Endothelial cell of umbilical vein (primary cell): ENCODE measurements at regions of chr7 and their contacts with region 1.

Region 1: DNA sequence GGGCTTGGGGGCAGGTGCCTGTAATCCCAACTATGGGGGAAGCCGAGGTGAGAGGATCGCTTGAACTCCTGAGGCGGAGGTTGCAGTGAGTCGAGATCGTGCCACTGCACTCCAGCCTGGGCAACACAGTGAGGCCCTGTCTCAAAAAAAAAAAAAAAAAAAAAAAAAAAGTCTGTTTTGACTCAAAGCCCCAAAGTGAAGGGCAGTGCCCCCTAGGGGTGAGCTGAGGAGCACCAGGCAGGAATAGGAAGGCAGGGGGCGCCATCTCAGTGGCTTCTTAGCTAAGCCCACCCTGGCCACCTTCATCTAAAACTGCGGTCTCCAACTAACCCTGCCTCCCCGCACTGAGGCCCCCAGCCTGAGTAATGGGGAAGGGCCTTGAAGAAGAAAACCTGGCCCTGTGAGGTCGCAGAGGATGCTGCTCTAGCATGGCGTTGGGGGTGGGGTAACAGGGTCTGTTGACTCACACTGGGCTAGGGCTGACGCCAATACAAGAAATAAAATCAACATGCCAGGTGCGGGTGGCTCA is 9.8 kb downstream of the PODXL start:
- DNase-seq: peak; percentile 57
- H3K4me3 ChIP-seq: no peak overlapping the region
- H3K27ac ChIP-seq: no peak overlapping the region
- H3K4me1 ChIP-seq: peaks cover 29% of the 10 kb centered on the region
- H3K27me3 ChIP-seq: no peaks in the 10 kb centered on the region
- CTCF ChIP-seq: peak; percentile 83 to 85
- POLR2A ChIP-seq: no peak

Region 2: DNA sequence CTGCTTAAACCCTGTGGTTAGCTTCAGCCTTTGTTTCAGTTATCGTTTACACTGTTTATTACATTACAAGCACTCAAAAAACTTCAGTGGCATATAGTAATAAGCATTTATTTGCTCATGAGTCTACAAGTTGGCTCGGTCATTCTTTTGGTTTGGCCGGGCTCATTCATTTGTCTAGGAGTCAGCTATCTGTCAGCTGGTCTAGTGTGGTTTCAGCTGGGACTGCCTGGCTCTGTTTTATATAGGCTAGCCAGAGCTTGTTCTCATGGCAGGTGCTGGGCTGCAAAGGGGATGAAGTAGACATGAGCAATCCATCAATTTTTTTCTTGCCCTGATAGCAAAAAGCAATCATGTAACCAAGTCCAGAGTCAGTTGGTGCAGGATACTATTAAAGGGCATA is 115.4 kb before region 1 on chr7:
- CTCF ChIA-PET with region 1: no interaction called
- POLR2A ChIA-PET with region 1: no interaction called
- dilution Hi-C with region 1: no loop called
- intact Hi-C with region 1: no loop called
- DNase-seq: no peak
- H3K4me3 ChIP-seq: no peak overlapping the region
- H3K27ac ChIP-seq: no peak overlapping the region
- H3K4me1 ChIP-seq: no peaks in the 10 kb centered on the region
- H3K27me3 ChIP-seq: no peaks in the 10 kb centered on the region
- CTCF ChIP-seq: no peak
- POLR2A ChIP-seq: no peak

Region 3: GRCh38 chr7:131507592-131508331 is 38.9 kb before region 1 on chr7:
- CTCF ChIA-PET with region 1: interaction called, 29 read pairs
- POLR2A ChIA-PET with region 1: no interaction called
- dilution Hi-C with region 1: no loop called
- intact Hi-C with region 1: loop called (anchors 1 kb)
- DNase-seq: peak; percentile 76
- H3K4me3 ChIP-seq: no peak overlapping the region
- H3K27ac ChIP-seq: no peak overlapping the region
- H3K4me1 ChIP-seq: peaks cover 18% of the 10 kb centered on the region
- H3K27me3 ChIP-seq: no peaks in the 10 kb centered on the region
- CTCF ChIP-seq: peak; percentile 87 to 90
- POLR2A ChIP-seq: no peak

Region 4: DNA sequence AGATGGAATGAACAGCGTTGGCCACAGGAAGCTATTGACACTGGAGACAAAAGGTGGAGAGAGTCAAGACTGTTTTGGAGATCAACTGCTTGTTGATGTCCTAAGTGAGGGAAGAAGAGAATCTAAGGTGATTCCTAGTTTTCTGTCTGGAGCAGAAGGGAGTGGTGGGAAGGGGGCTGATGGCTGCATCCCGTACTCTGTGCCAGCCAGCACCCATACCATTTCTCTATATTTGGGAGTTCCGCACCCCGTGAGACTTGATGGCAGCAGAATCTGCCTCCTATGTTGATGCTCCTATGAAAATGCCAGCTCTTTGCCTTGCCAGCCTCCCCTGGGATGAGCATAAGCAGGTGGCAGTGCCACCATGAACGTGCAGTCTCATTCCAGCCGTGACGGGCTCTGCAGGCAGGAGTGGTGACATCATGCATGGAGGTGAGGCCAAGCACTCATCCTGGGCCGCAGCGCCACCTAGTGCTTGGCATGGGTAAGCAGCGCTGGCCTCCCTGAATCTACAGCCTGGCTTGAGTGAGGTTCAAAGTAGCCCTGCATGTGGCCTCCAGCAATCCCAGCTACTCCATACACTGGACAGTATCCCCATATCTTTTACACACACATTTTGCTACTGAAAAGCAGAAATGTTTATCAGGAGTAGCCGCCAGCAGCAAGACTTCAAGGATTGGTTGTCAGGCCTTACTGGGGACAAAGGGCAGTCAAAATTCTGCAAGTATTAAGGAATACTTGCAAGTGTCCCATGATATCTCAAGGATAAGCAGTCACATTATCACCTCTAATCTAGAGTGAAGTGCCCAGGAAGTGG is 33.2 kb before region 1 on chr7:
- CTCF ChIA-PET with region 1: interaction called, 29 read pairs
- POLR2A ChIA-PET with region 1: no interaction called
- dilution Hi-C with region 1: no loop called
- intact Hi-C with region 1: loop called (anchors 1 kb)
- DNase-seq: peak; percentile 88
- H3K4me3 ChIP-seq: no peak overlapping the region
- H3K27ac ChIP-seq: peak overlapping the region; percentile 67
- H3K4me1 ChIP-seq: peaks cover 21% of the 10 kb centered on the region
- H3K27me3 ChIP-seq: no peaks in the 10 kb centered on the region
- CTCF ChIP-seq: peak; percentile 97 to 100
- POLR2A ChIP-seq: no peak

Region 5: DNA sequence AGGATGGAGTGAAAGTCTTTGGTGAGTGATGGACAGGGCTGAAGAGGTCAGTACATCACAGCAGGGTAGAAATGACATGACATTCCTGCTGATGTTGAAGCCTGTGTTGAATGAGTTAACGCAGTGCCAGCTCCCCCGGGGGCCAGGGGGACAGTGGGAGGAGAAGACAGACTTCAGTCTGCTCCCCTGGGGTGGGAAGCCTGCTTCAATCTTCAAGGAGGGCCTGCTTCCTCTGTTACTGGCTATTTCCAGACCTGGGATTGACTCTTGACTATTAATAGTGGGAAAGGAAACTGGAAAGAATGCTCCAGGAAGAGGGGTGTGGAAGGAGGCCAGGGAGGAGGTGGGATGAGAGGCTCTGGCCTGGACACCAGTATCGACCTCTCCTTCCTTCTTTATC is 17.5 kb before region 1 on chr7:
- CTCF ChIA-PET with region 1: interaction called, 8 read pairs
- POLR2A ChIA-PET with region 1: no interaction called
- dilution Hi-C with region 1: no loop called
- intact Hi-C with region 1: loop called (anchors 2 kb)
- DNase-seq: peak; percentile 74
- H3K4me3 ChIP-seq: no peak overlapping the region
- H3K27ac ChIP-seq: peak overlapping the region; percentile 28
- H3K4me1 ChIP-seq: peaks cover 57% of the 10 kb centered on the region
- H3K27me3 ChIP-seq: no peaks in the 10 kb centered on the region
- CTCF ChIP-seq: no peak
- POLR2A ChIP-seq: no peak

Region 6: DNA sequence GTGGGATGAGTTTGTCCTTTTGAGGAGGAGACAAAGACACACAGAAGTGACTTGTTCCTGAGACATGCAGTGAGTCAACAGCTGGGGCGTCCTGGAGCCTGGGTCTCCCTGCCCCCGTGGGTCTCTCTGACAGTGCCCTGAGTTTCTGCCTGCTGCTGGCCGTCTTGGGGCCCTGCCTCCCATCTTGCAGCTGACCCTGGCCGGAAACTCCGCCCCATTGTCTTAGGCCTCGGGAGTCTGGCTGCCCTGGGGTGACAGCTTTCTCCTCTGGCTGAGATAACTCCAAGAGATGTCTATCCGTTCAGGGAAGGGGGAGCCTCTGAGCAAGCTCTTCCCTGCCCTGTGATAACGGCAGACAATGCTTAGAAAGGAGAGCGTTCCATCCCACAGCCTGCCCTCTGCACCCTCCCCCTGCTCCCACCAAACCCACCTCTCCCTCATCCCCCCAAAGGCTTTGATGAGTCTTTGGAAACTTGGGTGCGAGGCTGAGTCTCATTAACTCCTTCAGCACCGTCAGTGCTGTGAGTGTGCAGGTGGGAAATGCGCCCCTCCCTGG is 79.2 kb after region 1 on chr7:
- CTCF ChIA-PET with region 1: interaction called, 12 read pairs
- POLR2A ChIA-PET with region 1: no interaction called
- dilution Hi-C with region 1: no loop called
- intact Hi-C with region 1: loop called (anchors 1 kb)
- DNase-seq: peak; percentile 76
- H3K4me3 ChIP-seq: no peak overlapping the region
- H3K27ac ChIP-seq: peak overlapping the region; percentile 96
- H3K4me1 ChIP-seq: peaks cover 73% of the 10 kb centered on the region
- H3K27me3 ChIP-seq: no peaks in the 10 kb centered on the region
- CTCF ChIP-seq: no peak
- POLR2A ChIP-seq: no peak

Region 7: GRCh38 chr7:131649003-131649541 is 102.4 kb after region 1 on chr7:
- CTCF ChIA-PET with region 1: interaction called, 13 read pairs
- POLR2A ChIA-PET with region 1: no interaction called
- dilution Hi-C with region 1: no loop called
- intact Hi-C with region 1: loop called (anchors 1 kb)
- DNase-seq: no peak
- H3K4me3 ChIP-seq: no peak overlapping the region
- H3K27ac ChIP-seq: no peak overlapping the region
- H3K4me1 ChIP-seq: peaks cover 11% of the 10 kb centered on the region
- H3K27me3 ChIP-seq: no peaks in the 10 kb centered on the region
- CTCF ChIP-seq: no peak
- POLR2A ChIP-seq: no peak

Region 8: DNA sequence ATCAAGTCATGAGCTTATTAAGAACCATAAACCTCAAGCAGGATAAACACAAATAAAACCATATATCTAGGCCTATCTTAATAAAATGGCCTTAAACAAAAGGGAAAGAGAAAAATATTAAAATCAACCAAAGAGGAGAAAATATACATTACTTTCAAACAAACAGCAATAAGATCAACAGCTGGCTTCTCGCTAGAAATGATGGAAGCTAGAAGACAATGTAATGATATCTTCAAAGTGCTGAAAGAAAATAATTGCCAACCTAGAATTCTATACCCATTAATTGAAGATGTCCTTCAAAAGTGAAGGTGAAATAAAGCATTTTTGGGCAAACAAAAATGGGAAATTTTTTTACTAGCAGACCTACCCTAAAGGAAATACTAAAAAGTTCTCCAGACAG is 152.7 kb after region 1 on chr7:
- CTCF ChIA-PET with region 1: no interaction called
- POLR2A ChIA-PET with region 1: no interaction called
- dilution Hi-C with region 1: no loop called
- intact Hi-C with region 1: no loop called
- DNase-seq: no peak
- H3K4me3 ChIP-seq: no peak overlapping the region
- H3K27ac ChIP-seq: no peak overlapping the region
- H3K4me1 ChIP-seq: no peaks in the 10 kb centered on the region
- H3K27me3 ChIP-seq: peaks cover 15 to 27% of the 10 kb centered on the region in 2 experiments
- CTCF ChIP-seq: no peak
- POLR2A ChIP-seq: no peak